MCF 10A (cell line): ENCODE measurements at regions of chr16 and their contacts with region 1.

Region 1: DNA sequence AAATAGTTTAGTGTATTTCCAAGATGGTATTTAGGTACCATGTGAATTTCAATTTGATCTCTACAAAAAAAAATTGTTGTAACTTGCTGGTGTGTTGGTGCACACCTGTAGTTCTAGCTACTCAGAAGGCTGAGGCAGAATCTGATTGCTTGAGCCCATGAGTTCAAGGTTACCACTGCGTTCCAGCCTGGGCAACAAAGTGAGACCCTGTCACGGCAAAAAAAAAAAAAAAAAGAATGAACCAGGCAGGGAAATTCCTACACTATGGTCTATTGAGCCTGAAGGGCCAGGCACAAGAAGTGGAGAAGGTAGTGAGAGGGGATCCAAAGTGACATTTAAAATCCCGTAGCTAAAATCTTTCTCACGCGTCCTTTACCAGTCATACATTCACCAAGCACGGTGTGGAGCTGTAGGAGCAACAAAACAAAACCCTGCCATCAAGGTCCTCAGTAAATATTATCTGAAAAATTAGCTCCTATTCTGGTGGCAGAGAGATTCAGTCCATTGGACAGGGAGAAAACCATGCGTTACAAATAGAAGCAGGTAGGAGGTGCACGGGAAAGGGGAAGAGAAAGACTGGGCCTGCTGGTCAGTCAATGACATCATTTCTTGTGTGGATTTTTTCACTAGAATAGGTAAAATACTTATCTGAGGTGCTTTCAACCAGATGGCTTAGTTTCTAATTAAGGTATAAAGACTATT is 27.3 kb downstream of the TXNDC11 start:
- DNase-seq: no peak
- H3K4me3 Mint-ChIP-seq: no peak overlapping the region
- H3K27ac Mint-ChIP-seq: no peak overlapping the region
- H3K4me1 Mint-ChIP-seq: no peaks in the 10 kb centered on the region
- H3K27me3 Mint-ChIP-seq: no peaks in the 10 kb centered on the region
- CTCF ChIP-seq: no peak

Region 2: DNA sequence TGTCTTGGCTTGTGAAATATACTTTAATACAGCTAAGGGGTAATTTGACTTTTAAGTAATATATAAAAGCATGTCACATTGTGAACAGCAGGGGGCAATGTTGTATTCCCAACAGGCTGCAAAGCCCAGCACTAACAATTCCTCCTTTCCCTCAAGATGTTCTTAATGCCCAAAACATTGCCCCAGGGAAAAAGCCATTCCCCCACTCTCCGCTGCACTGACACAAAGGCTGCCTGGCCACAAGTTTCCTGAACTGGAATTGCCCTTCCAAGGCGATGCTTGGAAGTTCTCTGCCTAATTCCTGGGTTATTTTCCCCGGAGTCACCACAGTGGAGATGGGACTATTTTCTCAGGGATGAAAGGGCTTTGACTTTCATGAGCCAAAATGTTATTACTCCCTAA is 743.8 kb before region 1 on chr16:
- CTCF ChIA-PET with region 1: interaction called, 4 read pairs
- POLR2A ChIA-PET with region 1: no interaction called
- intact Hi-C with region 1: loop called (anchors 10 kb)
- DNase-seq: peak; percentile 69
- H3K4me3 Mint-ChIP-seq: no peak overlapping the region
- H3K27ac Mint-ChIP-seq: no peak overlapping the region
- H3K4me1 Mint-ChIP-seq: peaks cover 5% of the 10 kb centered on the region
- H3K27me3 Mint-ChIP-seq: no peaks in the 10 kb centered on the region
- CTCF ChIP-seq: peak; percentile 72

Region 3: GRCh38 chr16:11396241-11397048 is 319.0 kb before region 1 on chr16:
- CTCF ChIA-PET with region 1: interaction called, 127 read pairs
- POLR2A ChIA-PET with region 1: interaction called, 7 read pairs
- intact Hi-C with region 1: loop called (anchors 1 kb)
- DNase-seq: peak; percentile 63
- H3K4me3 Mint-ChIP-seq: no peak overlapping the region
- H3K27ac Mint-ChIP-seq: no peak overlapping the region
- H3K4me1 Mint-ChIP-seq: no peaks in the 10 kb centered on the region
- H3K27me3 Mint-ChIP-seq: no peaks in the 10 kb centered on the region
- CTCF ChIP-seq: peak; percentile 99

Region 4: DNA sequence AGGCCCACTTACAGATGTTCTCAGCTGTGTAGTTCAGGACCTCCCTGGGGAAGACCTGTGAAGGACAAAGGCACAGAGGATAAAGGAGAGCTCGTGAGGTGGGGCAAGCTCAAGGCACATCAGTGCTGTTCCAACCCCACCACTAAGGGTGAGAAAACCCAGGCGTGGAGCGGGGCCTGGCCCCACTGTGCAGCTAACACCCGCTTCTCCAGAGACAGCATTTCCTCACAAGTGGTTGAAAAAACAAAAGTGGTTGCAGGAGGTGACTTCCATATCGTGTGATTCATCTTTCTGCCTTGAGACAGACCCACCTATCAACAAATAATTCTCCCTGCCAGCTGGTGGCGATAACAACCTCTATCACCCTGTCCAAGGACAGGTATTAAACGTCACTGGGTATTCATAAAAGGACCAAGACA is 17.1 kb before region 1 on chr16:
- CTCF ChIA-PET with region 1: interaction called, 11 read pairs
- POLR2A ChIA-PET with region 1: no interaction called
- intact Hi-C with region 1: no loop called
- DNase-seq: peak; percentile 19
- H3K4me3 Mint-ChIP-seq: no peak overlapping the region
- H3K27ac Mint-ChIP-seq: peak overlapping the region; percentile 49
- H3K4me1 Mint-ChIP-seq: peaks cover 6% of the 10 kb centered on the region
- H3K27me3 Mint-ChIP-seq: no peaks in the 10 kb centered on the region
- CTCF ChIP-seq: no peak

Region 5: DNA sequence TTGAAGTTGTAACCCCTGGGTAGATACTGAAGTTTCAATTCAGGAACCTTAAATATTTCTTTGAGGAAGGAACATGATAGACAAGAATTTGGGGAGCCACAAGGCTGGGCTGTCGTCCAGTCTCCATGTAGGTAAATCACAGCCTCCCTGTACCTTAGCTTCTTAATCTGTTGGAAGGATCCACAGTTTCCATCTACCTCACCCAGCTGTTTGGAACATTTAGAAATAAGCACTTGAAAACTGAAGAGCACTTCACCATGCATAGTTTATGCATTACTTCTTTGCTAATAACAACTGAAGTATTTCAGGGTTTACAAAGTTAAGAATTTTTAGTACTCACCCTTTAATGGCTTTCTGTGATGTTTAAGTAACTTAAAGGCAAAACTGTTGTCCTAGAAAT is 10.1 kb after region 1 on chr16:
- CTCF ChIA-PET with region 1: interaction called, 10 read pairs
- POLR2A ChIA-PET with region 1: no interaction called
- intact Hi-C with region 1: no loop called
- DNase-seq: no peak
- H3K4me3 Mint-ChIP-seq: no peak overlapping the region
- H3K27ac Mint-ChIP-seq: no peak overlapping the region
- H3K4me1 Mint-ChIP-seq: no peaks in the 10 kb centered on the region
- H3K27me3 Mint-ChIP-seq: no peaks in the 10 kb centered on the region
- CTCF ChIP-seq: no peak

Region 6: DNA sequence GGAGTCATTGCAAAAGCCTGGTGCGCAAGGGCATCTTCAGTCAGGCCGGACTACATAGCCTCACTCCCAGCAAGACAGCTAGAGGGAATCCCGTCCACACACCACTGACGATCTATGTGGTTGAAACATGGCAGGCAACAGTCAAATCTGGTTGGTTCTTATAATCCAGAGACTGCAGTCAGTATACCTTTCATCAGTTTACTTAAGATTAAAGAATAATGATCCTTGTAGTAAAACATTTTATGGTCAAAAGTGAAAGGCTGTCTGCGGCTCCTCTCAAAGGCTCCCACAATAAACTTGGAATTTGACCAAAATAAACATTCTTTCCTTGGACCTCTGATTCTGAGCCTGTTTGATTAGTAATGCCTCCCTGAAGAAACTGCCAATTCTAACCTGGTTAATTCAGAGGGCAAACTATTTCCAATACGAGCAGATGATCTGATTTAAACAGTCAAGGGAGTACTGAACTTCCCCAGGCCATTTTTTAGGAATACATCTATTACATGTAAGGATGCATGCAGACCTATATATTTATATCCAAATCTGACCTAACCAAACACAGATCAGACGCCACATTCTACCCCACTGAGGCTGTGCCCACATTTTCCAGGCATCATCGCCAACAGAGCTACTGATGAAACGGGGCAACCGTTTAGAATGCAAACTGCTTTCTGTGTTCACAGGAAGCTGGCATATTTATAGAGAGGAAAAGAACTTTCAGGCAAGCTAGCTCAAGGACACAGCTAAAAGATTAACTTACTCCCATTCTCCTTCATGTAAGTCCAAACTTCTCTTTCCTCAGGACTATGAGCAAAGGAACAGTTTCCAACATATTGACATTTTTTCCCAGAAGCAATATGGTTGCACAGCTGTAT is 42.5 kb after region 1 on chr16:
- CTCF ChIA-PET with region 1: no interaction called
- POLR2A ChIA-PET with region 1: no interaction called
- intact Hi-C with region 1: no loop called
- DNase-seq: peak; percentile 59
- H3K4me3 Mint-ChIP-seq: no peak overlapping the region
- H3K27ac Mint-ChIP-seq: no peak overlapping the region
- H3K4me1 Mint-ChIP-seq: no peaks in the 10 kb centered on the region
- H3K27me3 Mint-ChIP-seq: no peaks in the 10 kb centered on the region
- CTCF ChIP-seq: no peak